HCT116 (cell line): ENCODE measurements at regions of chr22 and their contacts with region 1.

Region 1: DNA sequence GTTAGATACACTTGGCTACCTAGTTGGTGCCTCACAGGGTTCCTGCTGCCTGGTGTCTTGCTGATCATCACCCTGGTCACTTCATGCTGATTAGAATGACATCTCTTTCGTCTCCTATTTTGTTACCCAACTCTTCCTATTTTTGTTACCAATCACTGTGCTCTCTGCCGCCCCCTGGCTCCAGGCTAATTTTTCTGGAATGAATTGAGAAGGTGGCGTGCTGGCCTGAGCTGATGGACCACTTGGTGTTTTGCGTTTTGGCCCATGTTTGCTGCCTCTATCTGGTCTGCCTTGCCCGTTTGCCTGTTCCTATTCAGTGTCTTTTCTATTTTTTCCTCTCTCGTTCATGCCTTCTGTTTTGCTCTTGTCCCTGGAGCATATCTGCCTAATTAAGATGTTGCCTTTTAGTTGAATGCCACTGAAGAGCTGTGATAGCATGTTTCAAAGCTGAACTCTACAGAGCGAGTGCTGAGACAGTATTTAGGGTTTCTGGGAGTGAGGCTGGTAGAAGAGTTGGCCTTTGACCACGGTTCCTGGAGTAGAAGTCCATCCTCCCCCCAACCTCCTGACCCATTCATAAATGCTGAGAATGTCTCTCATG is 5.9 kb upstream of the ATF4 start:
- DNase-seq: no peak
- ATAC-seq: peak; percentile 51; the same call in 1 of the 2 replicates
- H3K4me3 ChIP-seq: no peak overlapping the region
- H3K27ac ChIP-seq: no peak overlapping the region
- H3K4me1 ChIP-seq: peaks cover 10 to 20% of the 10 kb centered on the region in 2 experiments
- H3K27me3 ChIP-seq: no peaks in the 10 kb centered on the region
- CTCF ChIP-seq: peak; percentile 64 to 84 (median 80); a peak in 5 of 6 replicates
- POLR2A ChIP-seq: no peak
- RAD21 ChIP-seq: peak; percentile 53; the same call in 1 of the 2 replicates

Region 2: GRCh38 chr22:39496131-39496838 is 18.2 kb before region 1 on chr22:
- CTCF ChIA-PET with region 1: interaction called, 16 read pairs
- POLR2A ChIA-PET with region 1: interaction called, 37 read pairs
- RAD21 ChIA-PET with region 1: interaction called in 1 of 2 experiments, 5 read pairs
- intact Hi-C with region 1: no loop called
- DNase-seq: peak; percentile 56
- ATAC-seq: peak; percentile 86
- H3K4me3 ChIP-seq: no peak overlapping the region
- H3K27ac ChIP-seq: peak overlapping the region; percentile 43
- H3K4me1 ChIP-seq: peaks cover 14 to 41% of the 10 kb centered on the region in 2 experiments
- H3K27me3 ChIP-seq: no peaks in the 10 kb centered on the region
- CTCF ChIP-seq: peak; percentile 70 to 92 (median 90)
- POLR2A ChIP-seq: no peak
- RAD21 ChIP-seq: peak; percentile 38; the same call in 1 of the 2 replicates

Region 3: DNA sequence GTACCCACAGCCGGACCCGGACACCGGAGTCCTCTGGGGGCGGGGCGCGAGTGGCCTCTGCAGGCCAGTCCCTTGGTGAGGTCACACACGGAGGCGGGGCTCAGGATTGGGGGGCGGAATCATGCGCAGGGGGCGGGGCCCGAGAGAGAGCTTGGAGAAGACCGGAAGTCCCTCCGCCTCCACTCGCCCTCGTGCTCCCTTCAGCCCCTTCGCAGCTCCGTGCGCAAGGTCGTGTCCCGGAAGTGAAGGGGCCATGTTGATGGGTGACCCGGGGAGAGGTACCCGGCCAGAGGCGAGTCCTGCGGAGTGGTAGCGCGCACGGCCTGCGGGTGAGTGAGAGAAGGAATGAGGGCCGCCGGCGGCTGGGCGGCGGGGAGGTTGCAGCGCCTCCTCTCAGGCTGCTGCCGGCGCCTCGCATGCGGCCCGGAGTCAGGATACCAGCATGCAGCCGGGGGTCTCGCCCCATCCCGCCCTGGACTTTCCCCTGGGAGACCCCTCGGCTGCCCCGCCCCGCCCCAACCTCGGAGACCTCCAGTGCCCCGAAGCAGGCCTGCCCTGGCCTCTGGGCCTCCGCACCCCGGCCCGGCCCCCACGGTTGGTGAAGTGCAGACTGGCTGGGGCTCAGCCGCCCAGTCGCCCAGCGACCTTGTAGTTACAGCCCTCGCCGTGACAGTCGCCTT is 12.2 kb before region 1 on chr22 and contains the start of gene MIEF1:
- CTCF ChIA-PET with region 1: interaction called, 19 read pairs
- POLR2A ChIA-PET with region 1: interaction called, 37 read pairs
- RAD21 ChIA-PET with region 1: interaction called in 1 of 2 experiments, 3 read pairs
- intact Hi-C with region 1: no loop called
- DNase-seq: peak; percentile 94
- ATAC-seq: peak; percentile 93
- H3K4me3 ChIP-seq: peak within 1 kb of the TSS; percentile 92 to 97
- H3K27ac ChIP-seq: peak within 1 kb of the TSS; percentile 70
- H3K4me1 ChIP-seq: peaks cover 16 to 29% of the 10 kb centered on the region in 2 experiments
- H3K27me3 ChIP-seq: no peaks in the 10 kb centered on the region
- CTCF ChIP-seq: no peak
- POLR2A ChIP-seq: peak; percentile 65
- RAD21 ChIP-seq: no peak
- total RNA-seq, gene MIEF1: 42.8 TPM